ENCODE measurements at regions of chr6 and their contacts with region 1.

Region 1: GRCh38 chr6:149723771-149724417 is 6.0 kb upstream of the LATS1 start:
- DNase-seq: no peak
- H3K4me3 ChIP-seq: no peak overlapping the region
- H3K27ac ChIP-seq: no peak overlapping the region
- H3K4me1 ChIP-seq: peaks cover 0 to 2% (median 1%) of the 10 kb centered on the region in 4 donors
- H3K27me3 ChIP-seq: no peaks in the 10 kb centered on the region
- CTCF ChIP-seq: peak; percentile 44 to 71 (median 48)
- EP300 ChIP-seq: no peak
- POLR2A ChIP-seq: no peak

Region 2: DNA sequence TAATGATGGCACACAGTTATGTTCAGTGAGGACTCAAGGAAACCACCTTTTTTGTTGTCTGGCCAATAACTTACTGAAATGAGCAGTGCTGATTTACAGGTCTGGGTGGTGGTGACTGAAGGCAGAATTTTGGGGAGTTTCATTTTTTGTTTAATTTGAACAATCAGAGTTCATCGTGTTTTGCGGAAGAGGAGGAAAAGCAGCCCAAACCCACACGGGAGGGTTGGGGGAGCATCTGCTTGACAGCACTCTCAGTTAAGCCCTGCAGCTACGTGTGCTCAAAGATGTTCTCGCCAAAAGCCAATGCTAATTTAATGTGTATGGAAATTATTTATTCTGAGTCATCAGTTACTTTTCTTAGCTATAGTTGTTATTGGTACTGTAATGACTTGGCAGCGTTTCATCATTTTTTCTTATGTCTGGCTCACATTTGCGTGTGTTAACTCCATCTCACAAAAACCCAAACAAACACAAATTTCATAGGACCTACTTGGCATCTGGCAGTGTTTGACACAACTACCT is 887.9 kb before region 1 on chr6:
- intact Hi-C with region 1: no loop called
- DNase-seq: no peak
- H3K4me3 ChIP-seq: no peak overlapping the region
- H3K27ac ChIP-seq: no peak overlapping the region
- H3K4me1 ChIP-seq: peaks cover 0 to 9% (median 4%) of the 10 kb centered on the region in 4 donors
- H3K27me3 ChIP-seq: no peaks in the 10 kb centered on the region
- CTCF ChIP-seq: no peak
- EP300 ChIP-seq: no peak
- POLR2A ChIP-seq: no peak

Region 3: GRCh38 chr6:149565527-149566409 is 158.1 kb before region 1 on chr6 and contains the start of gene GINM1:
- intact Hi-C with region 1: loop called (anchors 10 kb)
- DNase-seq: peak; percentile 97
- H3K4me3 ChIP-seq: peak within 1 kb of the TSS; percentile 92 to 99 (median 96)
- H3K27ac ChIP-seq: peak within 1 kb of the TSS; percentile 94 to 98 (median 97)
- H3K4me1 ChIP-seq: peaks cover 19 to 22% (median 20%) of the 10 kb centered on the region in 4 donors
- H3K27me3 ChIP-seq: no peaks in the 10 kb centered on the region
- CTCF ChIP-seq: peak; percentile 41 to 62 (median 52)
- EP300 ChIP-seq: no peak
- POLR2A ChIP-seq: no peak
- total RNA-seq, gene GINM1: 53.7 to 71.8 (median 57.0) TPM

Region 4: DNA sequence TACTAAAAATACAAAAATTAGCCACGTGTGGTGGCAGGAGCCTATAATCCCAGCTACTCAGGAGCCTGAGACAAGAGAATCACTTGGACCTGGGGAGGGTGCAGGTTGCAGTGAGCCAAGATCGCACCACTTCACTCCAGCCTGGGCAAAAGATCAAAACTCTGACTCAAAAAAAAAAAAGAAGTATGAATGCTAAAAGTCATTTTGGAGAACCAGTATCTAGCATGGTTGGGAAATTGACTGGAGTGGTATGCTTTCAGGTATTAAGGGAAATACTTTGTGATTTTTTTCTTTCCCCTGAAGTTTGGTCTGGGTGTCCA is 55.7 kb after region 1 on chr6:
- intact Hi-C with region 1: no loop called
- DNase-seq: no peak
- H3K4me3 ChIP-seq: no peak overlapping the region
- H3K27ac ChIP-seq: no peak overlapping the region
- H3K4me1 ChIP-seq: no peaks in the 10 kb centered on the region
- H3K27me3 ChIP-seq: no peaks in the 10 kb centered on the region
- CTCF ChIP-seq: no peak
- EP300 ChIP-seq: no peak
- POLR2A ChIP-seq: no peak

Region 5: DNA sequence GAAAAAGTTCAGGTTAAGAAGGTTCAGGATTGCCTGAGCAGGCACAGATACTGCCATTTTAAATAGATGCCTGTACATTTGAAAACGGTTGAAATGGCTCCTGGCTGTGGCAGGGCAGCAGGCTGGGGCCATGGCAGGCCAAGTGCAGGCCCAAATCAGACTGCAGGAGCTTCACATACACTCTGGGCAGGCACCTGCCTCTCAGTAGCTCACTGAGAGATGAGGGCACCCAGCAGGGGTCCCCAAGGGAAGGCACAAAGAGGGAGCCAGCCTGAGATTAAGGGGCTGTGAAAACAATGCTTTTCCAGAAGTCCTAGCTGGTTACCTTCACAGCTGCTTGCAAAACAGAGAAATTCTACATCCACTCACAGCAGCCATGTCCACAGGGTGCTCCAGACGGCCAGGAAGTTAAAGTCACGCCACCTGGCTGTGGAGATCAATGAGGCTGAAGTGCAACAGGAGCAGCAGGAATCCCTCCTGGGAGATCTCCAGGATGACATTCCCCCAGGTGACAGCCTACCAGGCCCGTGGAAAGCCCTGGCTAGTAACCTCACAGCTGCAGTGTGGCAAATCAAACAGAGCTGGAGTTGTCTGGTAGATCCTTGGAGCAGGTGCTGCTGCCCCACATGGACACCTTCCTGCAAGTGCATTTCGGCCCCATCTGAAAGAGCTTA is 180.2 kb after region 1 on chr6:
- intact Hi-C with region 1: no loop called
- DNase-seq: no peak
- H3K4me3 ChIP-seq: no peak overlapping the region
- H3K27ac ChIP-seq: no peak overlapping the region
- H3K4me1 ChIP-seq: no peaks in the 10 kb centered on the region
- H3K27me3 ChIP-seq: no peaks in the 10 kb centered on the region
- CTCF ChIP-seq: no peak
- EP300 ChIP-seq: no peak
- POLR2A ChIP-seq: no peak

Region 6: GRCh38 chr6:150001295-150002008 is 277.6 kb after region 1 on chr6:
- intact Hi-C with region 1: no loop called
- DNase-seq: no peak
- H3K4me3 ChIP-seq: no peak overlapping the region
- H3K27ac ChIP-seq: no peak overlapping the region
- H3K4me1 ChIP-seq: peaks cover 12 to 19% (median 18%) of the 10 kb centered on the region in 4 donors
- H3K27me3 ChIP-seq: peaks cover 0 to 100% (median 15%) of the 10 kb centered on the region in 4 donors
- CTCF ChIP-seq: no peak
- EP300 ChIP-seq: no peak
- POLR2A ChIP-seq: no peak